ENCODE measurements at regions of chr9 and their contacts with region 1.

Region 1: DNA sequence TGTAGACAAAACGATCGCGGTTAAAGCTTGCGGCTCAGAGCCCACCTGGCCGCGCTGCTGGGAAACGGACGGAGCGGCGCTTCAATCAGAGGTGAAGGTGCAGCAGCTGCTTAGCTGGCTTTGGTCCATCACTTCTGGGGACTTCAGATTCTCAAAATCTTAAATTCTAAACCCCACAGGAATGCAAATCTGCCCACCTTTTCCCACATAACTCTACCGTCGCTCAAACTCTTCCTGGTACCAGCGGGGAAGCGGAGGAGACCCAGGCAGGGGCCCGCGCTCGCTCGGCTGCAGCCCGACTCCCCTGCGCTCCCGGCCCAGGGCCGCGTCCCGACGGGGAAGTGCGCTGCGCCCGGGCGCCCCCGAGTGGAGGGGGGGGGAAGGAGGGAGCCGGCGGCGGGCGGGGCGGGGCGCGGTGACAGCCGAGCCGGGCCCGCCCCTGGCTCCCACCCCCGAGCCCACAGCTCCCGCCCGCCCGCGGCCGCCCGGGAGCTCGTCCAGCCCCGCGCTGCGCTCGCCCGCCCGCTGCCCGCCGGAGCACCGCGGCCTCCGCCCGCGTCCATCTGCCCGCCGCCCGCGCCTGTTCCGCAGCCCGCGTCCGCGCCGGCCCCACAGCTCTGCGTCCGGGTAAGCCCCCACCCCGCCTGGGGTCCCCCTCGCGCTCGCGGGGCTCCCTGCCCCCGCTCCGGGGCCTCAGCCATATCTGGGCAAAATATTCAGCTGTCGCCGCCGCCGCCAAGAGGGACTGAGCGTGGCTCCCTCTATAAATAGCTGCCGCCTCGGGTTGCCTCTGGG is at the start of gene TMOD1:
- DNase-seq: peak; percentile 99
- H3K4me3 ChIP-seq: peak within 1 kb of the TSS; percentile 60 to 64
- H3K27ac ChIP-seq: peak within 1 kb of the TSS in 1 of 2 experiments; percentile 100; a peak in 2 of 4 replicates
- H3K4me1 ChIP-seq: peaks cover 0 to 29% of the 10 kb centered on the region in 2 experiments; a peak in 2 of 4 replicates
- H3K27me3 ChIP-seq: peaks cover 48% of the 10 kb centered on the region
- CTCF ChIP-seq: peak; percentile 23
- EP300 ChIP-seq: no peak
- RAD21 ChIP-seq: peak; percentile 25; the same call in 1 of the 2 replicates
- polyA plus RNA-seq, gene TMOD1: 0.54 and 1.6 TPM in 2 replicates

Region 2: GRCh38 chr9:97324954-97325353 is 176.4 kb before region 1 on chr9:
- CTCF ChIA-PET with region 1: no interaction called
- POLR2A ChIA-PET with region 1: no interaction called
- DNase-seq: no peak
- H3K4me3 ChIP-seq: no peak overlapping the region
- H3K27ac ChIP-seq: no peak overlapping the region
- H3K4me1 ChIP-seq: no peaks in the 10 kb centered on the region; a peak in 1 of 4 replicates
- H3K27me3 ChIP-seq: no peaks in the 10 kb centered on the region
- CTCF ChIP-seq: no peak
- EP300 ChIP-seq: no peak
- RAD21 ChIP-seq: no peak

Region 3: GRCh38 chr9:97478301-97478981 is 22.9 kb before region 1 on chr9:
- CTCF ChIA-PET with region 1: interaction called, 153 read pairs
- POLR2A ChIA-PET with region 1: interaction called, 7 read pairs
- DNase-seq: no peak
- H3K4me3 ChIP-seq: no peak overlapping the region
- H3K27ac ChIP-seq: peak overlapping the region in 1 of 2 experiments; percentile 19; a peak in 1 of 4 replicates
- H3K4me1 ChIP-seq: peaks cover 0 to 26% of the 10 kb centered on the region in 2 experiments; a peak in 3 of 4 replicates
- H3K27me3 ChIP-seq: no peaks in the 10 kb centered on the region
- CTCF ChIP-seq: no peak
- EP300 ChIP-seq: no peak; a peak in 1 of 4 replicates
- RAD21 ChIP-seq: no peak

Region 4: GRCh38 chr9:97487107-97487506 is 14.3 kb before region 1 on chr9:
- CTCF ChIA-PET with region 1: interaction called, 49 read pairs
- POLR2A ChIA-PET with region 1: interaction called, 3 read pairs
- DNase-seq: no peak
- H3K4me3 ChIP-seq: no peak overlapping the region
- H3K27ac ChIP-seq: no peak overlapping the region
- H3K4me1 ChIP-seq: peaks cover 0 to 2% of the 10 kb centered on the region in 2 experiments; a peak in 1 of 4 replicates
- H3K27me3 ChIP-seq: no peaks in the 10 kb centered on the region
- CTCF ChIP-seq: peak; percentile 28; the same call in 1 of the 2 replicates
- EP300 ChIP-seq: no peak
- RAD21 ChIP-seq: no peak

Region 5: GRCh38 chr9:97548819-97549540 is 47.6 kb after region 1 on chr9:
- CTCF ChIA-PET with region 1: interaction called, 13 read pairs
- POLR2A ChIA-PET with region 1: interaction called, 3 read pairs
- DNase-seq: no peak
- H3K4me3 ChIP-seq: no peak overlapping the region
- H3K27ac ChIP-seq: no peak overlapping the region
- H3K4me1 ChIP-seq: peaks cover 0 to 9% of the 10 kb centered on the region in 2 experiments; a peak in 1 of 4 replicates
- H3K27me3 ChIP-seq: no peaks in the 10 kb centered on the region
- CTCF ChIP-seq: no peak
- EP300 ChIP-seq: no peak
- RAD21 ChIP-seq: no peak

Region 6: DNA sequence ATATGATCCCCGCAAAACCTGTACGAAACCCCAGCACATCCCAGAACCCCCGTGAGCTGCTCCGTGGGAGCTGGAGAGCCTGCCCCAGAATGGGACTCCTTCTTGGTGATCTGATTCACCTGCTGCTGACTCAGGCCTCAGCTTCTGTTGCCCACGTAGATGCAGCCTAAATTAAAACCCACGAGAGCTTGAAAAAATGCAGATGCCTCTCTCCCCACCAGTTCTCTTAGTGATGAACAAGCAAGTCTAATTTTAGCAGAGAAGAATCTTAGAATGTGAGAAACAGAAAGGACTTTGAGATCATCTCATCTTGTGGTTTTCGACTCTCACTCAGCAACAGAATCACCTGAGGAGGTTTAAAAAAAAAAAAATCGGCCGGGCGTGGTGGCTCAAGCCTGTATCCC is 57.7 kb after region 1 on chr9:
- CTCF ChIA-PET with region 1: interaction called, 17 read pairs
- POLR2A ChIA-PET with region 1: interaction called, 27 read pairs
- DNase-seq: no peak
- H3K4me3 ChIP-seq: no peak overlapping the region
- H3K27ac ChIP-seq: peak overlapping the region in 1 of 2 experiments; percentile 35; a peak in 2 of 4 replicates
- H3K4me1 ChIP-seq: peaks cover 0 to 86% of the 10 kb centered on the region in 2 experiments; a peak in 2 of 4 replicates
- H3K27me3 ChIP-seq: 0 out of 2 replicates have a peak, but pooled peaks cover 16% of the 10 kb centered on the region
- CTCF ChIP-seq: no peak
- EP300 ChIP-seq: no peak
- RAD21 ChIP-seq: no peak

Region 7: GRCh38 chr9:97564291-97565175 is 63.2 kb after region 1 on chr9:
- CTCF ChIA-PET with region 1: interaction called, 17 read pairs
- POLR2A ChIA-PET with region 1: interaction called, 27 read pairs
- DNase-seq: peak; percentile 83
- H3K4me3 ChIP-seq: peak overlapping the region; percentile 10 to 16; a peak in 2 of 4 replicates
- H3K27ac ChIP-seq: peak overlapping the region in 1 of 2 experiments; percentile 98; a peak in 2 of 4 replicates
- H3K4me1 ChIP-seq: peaks cover 0 to 84% of the 10 kb centered on the region in 2 experiments; a peak in 2 of 4 replicates
- H3K27me3 ChIP-seq: no peaks in the 10 kb centered on the region
- CTCF ChIP-seq: no peak
- EP300 ChIP-seq: peak; percentile 15 to 97; a peak in 3 of 4 replicates
- RAD21 ChIP-seq: peak; percentile 57

Region 8: GRCh38 chr9:97615439-97616072 is 114.2 kb after region 1 on chr9:
- CTCF ChIA-PET with region 1: interaction called, 36 read pairs
- POLR2A ChIA-PET with region 1: no interaction called
- DNase-seq: peak; percentile 61
- H3K4me3 ChIP-seq: no peak overlapping the region
- H3K27ac ChIP-seq: no peak overlapping the region; a peak in 1 of 4 replicates
- H3K4me1 ChIP-seq: no peaks in the 10 kb centered on the region
- H3K27me3 ChIP-seq: no peaks in the 10 kb centered on the region
- CTCF ChIP-seq: peak; percentile 85
- EP300 ChIP-seq: no peak
- RAD21 ChIP-seq: peak; percentile 87

Region 9: DNA sequence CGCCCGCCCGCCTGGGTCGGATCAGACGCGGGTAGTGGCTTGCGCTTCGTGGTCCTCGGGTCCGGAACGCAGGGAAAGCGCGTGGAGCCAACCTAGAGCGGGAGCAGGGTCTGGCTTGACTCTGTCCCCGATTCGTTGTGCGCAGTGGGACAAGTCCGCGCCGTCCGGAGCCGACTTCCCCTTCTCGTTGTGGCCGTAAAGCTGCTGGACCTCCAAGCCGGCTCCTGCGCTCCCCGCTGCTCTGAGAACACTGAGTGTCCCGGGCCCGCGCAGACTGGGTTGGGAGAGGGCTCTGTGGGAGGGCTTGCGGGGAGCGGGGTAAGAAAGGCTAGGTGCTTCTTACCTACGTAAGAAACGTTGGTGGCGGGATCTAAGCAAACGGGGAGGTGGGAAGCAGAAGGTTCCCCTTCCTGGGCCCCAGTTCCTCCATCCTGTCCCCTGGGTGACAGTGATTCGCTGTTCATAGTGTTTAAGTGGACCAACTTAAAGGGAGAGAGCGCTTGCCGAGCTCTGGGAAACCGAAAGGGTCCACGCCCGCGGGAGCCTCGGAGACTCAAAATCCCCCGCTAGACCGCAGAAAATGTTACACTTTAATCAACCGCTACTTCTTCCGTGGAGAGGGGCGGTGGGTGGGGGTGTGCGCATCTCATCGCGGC is 347.3 kb after region 1 on chr9:
- CTCF ChIA-PET with region 1: no interaction called
- POLR2A ChIA-PET with region 1: no interaction called
- DNase-seq: no peak
- H3K4me3 ChIP-seq: no peak overlapping the region
- H3K27ac ChIP-seq: no peak overlapping the region
- H3K4me1 ChIP-seq: no peaks in the 10 kb centered on the region; a peak in 1 of 4 replicates
- H3K27me3 ChIP-seq: peaks cover 70% of the 10 kb centered on the region
- CTCF ChIP-seq: no peak
- EP300 ChIP-seq: no peak
- RAD21 ChIP-seq: no peak